Activated CD4-positive, alpha-beta T cell treated with anti-CD3 and anti-CD28 coated beads for 36 hours (primary cell): ENCODE measurements at regions of chr2 and their contacts with region 1.

Region 1: DNA sequence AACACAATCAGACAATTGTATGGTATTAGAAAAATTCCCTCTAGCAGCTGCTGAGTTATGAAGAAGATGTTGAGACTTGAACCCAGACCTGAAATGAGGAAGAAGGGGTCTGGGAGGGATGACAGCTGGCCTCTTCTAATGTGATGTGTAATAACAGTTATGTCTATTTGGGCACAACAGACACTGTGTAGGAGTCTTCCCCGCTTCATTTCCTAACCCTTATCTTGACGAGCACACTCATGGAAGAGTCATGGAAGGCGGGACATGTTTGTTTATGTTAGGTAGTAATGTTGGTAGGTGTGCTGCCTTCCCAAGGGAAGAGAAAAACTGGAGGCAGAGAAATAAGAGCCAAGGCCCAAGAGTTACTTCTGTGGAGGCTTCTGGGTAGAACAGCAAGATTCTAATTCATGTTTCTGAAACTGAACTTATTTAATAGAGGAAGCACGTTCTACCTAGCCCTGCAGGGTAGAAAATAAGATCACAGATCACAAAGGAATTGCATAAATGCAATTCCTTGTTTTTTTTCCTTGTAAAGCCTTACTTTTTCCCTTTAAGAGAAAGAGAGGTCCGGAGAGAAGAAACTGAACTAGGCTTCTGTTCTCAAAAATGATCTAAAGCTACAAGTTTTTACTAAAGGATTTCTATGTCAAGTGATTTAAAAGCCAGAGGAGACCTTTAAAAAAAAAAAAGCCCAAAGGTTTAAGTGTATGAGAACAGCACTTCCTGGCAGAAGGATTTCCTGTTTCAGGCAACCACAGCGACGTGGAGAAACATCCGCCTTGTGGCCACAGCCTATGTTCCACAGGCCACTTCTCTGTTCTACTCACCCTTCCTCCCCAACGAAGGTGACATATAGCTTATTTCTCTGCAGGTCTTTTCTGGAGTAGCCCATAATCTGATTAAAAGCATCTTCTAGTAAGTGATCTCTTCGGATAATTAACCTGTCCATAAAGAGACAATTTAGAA is 68.5 kb upstream of the STK17B start:
- DNase-seq: peak; percentile 91
- ATAC-seq: peak; percentile 58
- H3K4me3 Mint-ChIP-seq: peak overlapping the region; percentile 46
- H3K27ac Mint-ChIP-seq: peak overlapping the region; percentile 97
- H3K4me1 Mint-ChIP-seq: peaks cover 91% of the 10 kb centered on the region
- H3K27me3 Mint-ChIP-seq: no peaks in the 10 kb centered on the region

Region 2: DNA sequence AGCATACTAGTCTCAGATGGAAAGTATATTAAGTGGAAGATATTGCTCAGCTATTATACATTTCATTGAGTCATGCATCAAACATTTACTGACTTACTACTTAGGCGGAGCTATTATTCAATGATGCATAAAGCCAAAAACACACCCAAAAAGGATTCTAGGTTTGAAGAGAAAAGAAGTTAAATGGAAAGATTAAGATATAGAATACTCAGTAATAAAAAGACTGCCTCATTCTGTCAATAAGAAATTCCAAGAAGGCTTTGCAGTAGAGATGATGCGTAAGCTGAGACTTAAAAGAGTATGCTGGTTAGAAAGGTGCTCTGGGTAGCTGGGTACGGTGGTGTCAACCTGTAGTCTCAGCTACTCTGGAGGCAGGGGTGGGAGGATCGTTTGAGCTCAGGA is 96.2 kb before region 1 on chr2:
- CTCF ChIA-PET with region 1: no interaction called
- POLR2A ChIA-PET with region 1: no interaction called
- intact Hi-C with region 1: loop called in 1 of 2 experiments (anchors 1 kb)
- DNase-seq: no peak
- ATAC-seq: peak; percentile 62
- H3K4me3 Mint-ChIP-seq: peak overlapping the region; percentile 39
- H3K27ac Mint-ChIP-seq: peak overlapping the region; percentile 87
- H3K4me1 Mint-ChIP-seq: peaks cover 68% of the 10 kb centered on the region
- H3K27me3 Mint-ChIP-seq: no peaks in the 10 kb centered on the region

Region 3: GRCh38 chr2:196200557-196200956 is 39.3 kb before region 1 on chr2:
- CTCF ChIA-PET with region 1: interaction called, 5 read pairs
- POLR2A ChIA-PET with region 1: interaction called, 3 read pairs
- intact Hi-C with region 1: loop called (anchors 1 kb)
- DNase-seq: peak; percentile 65
- ATAC-seq: peak; percentile 92
- H3K4me3 Mint-ChIP-seq: peak overlapping the region; percentile 47
- H3K27ac Mint-ChIP-seq: peak overlapping the region; percentile 90
- H3K4me1 Mint-ChIP-seq: peaks cover 49% of the 10 kb centered on the region
- H3K27me3 Mint-ChIP-seq: no peaks in the 10 kb centered on the region

Region 4: DNA sequence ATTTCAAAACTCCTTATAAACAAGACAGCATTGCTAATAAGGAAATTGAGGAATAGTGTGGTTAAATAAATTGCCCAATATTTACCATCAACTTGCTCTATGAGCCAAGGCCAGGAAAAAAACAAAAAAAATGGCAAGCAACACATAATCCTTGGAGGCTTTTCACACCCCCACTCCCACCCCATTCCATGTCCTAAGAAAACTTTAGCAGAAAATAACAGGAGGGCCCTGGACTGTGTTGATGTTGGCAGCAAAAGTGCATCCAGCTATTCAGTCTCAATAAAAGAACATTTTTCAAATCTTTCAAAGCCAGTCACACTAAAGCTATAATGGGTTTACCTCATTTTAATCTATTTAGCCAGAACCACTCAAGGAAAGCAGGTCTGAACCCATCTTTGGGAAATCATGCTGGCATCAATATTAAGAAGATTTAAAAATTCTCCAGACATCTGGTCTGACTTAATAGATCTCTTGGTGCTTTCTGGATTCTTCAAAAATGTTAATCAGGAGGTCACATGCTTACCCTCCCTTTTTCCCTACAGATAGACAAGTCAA is 33.9 kb before region 1 on chr2:
- CTCF ChIA-PET with region 1: interaction called, 3 read pairs
- POLR2A ChIA-PET with region 1: no interaction called
- intact Hi-C with region 1: loop called (anchors 1 kb)
- DNase-seq: no peak
- ATAC-seq: no peak
- H3K4me3 Mint-ChIP-seq: no peak overlapping the region
- H3K27ac Mint-ChIP-seq: peak overlapping the region; percentile 35
- H3K4me1 Mint-ChIP-seq: peaks cover 45% of the 10 kb centered on the region
- H3K27me3 Mint-ChIP-seq: no peaks in the 10 kb centered on the region